ENCODE measurements at regions of chr18 and their contacts with region 1.

Region 1: DNA sequence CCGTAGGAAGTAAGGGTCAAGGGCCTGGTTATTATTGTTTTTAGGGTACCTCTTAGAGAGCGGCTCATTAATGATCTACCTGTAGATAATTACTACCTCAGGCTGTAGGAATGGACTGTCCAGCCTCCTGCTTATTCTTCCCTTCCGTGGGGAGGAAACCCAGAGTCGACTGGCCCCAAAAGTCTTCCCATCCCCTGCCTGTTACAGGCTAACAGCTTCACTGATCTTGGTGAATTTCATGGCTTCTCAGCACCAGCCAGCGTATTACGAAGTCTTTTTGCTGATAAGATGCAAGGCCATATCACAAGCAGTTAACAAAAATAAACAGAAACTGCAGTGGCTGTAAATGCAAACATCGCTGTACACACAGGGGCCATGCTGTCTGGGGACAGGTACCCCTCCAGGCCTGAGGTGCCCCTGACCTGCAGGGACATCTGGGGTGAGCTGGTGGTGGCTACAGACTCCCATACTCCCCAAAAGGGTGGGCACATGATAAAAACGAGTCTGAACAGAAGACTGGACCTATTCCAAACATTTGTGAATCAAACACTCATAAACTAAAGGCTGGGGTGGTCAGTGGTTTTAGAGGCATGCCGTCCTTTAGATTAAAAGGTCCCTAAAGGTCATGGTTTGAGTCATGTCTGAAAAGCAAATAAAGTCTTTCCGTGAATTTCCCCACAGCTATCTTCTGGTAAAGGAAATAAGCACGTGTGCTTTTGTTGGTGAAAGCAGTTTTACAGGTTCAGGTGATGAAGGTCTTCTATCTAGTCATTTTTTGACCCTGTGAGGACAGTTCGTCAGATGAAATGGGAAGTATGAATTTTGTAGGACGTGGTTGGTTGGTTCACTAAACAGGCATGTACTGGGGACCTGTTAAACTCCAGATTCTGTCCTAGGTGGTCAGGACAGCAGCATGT is 36.7 kb downstream of the TTC39C start:
- DNase-seq: no peak
- ATAC-seq: no peak
- H3K4me3 ChIP-seq: no peak overlapping the region
- H3K4me3 Mint-ChIP-seq: peak overlapping the region in 7 of 10 donors; percentile 16 to 50 (median 34)
- H3K27ac ChIP-seq: no peak overlapping the region
- H3K27ac Mint-ChIP-seq: peak overlapping the region in 8 of 9 donors; percentile 2 to 83 (median 51)
- H3K4me1 ChIP-seq: peaks cover 53 to 60% of the 10 kb centered on the region in 2 donors
- H3K4me1 Mint-ChIP-seq: peaks cover 49 to 96% (median 85%) of the 10 kb centered on the region in 7 donors
- H3K27me3 ChIP-seq: no peaks in the 10 kb centered on the region
- H3K27me3 Mint-ChIP-seq: no peaks in the 10 kb centered on the region

Region 2: DNA sequence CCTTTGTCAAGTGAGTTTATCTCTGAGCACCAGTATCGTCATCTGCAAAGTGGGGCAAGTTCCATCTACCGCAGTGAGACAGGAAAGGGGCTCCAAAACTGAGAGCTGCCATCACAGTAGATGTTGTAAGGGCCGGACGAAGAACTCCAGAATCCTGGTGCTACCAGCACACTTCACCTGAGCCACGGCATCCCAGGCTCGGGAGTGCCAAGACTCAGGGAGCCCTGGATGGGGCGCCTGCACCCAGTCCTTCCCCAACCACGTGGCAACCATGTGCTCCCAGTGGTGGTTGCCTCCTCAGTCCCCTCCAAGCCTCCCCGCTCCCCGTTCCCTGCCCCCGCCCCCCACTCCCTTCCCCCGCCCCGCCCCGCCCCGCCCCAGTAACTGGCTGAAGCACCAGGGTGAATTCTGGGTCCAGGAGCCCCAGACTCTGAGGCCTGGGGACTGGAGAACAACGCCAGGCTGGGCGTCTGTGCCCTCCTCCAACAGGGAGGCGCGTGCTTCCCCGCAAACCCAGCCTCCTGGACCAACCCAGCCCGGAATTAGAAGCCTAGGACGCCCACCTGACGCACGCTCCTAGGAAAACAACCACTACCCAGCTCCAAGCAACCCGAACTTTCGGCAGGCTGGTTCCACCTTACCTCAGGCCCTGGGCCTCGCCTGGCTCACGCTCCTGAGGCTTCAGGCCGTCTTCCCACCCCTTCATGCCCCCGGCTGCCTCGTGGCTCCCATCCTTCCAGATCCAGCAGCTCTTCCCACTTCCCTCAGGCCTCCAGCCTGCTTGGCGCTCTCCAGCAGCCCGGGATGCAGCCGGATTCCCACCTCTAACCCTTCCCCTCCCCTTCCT is 294.5 kb before region 1 on chr18:
- CTCF ChIA-PET with region 1: no interaction called
- POLR2A ChIA-PET with region 1: no interaction called
- intact Hi-C with region 1: no loop called
- DNase-seq: no peak
- ATAC-seq: no peak
- H3K4me3 ChIP-seq: no peak overlapping the region
- H3K4me3 Mint-ChIP-seq: no peak overlapping the region
- H3K27ac ChIP-seq: no peak overlapping the region
- H3K27ac Mint-ChIP-seq: no peak overlapping the region
- H3K4me1 ChIP-seq: no peaks in the 10 kb centered on the region
- H3K4me1 Mint-ChIP-seq: no peaks in the 10 kb centered on the region
- H3K27me3 ChIP-seq: no peaks in the 10 kb centered on the region
- H3K27me3 Mint-ChIP-seq: peaks cover 0 to 16% (median 4%) of the 10 kb centered on the region in 5 donors

Region 3: GRCh38 chr18:24019641-24020331 is 31.5 kb before region 1 on chr18:
- CTCF ChIA-PET with region 1: no interaction called
- POLR2A ChIA-PET with region 1: no interaction called
- intact Hi-C with region 1: loop called (anchors 1 to 2 kb)
- DNase-seq: peak in 8 of 9 donors; percentile 53 to 74 (median 62)
- ATAC-seq: peak; percentile 76
- H3K4me3 ChIP-seq: peak overlapping the region; percentile 32
- H3K4me3 Mint-ChIP-seq: peak overlapping the region; percentile 63 to 97 (median 80)
- H3K27ac ChIP-seq: peak overlapping the region; percentile 53
- H3K27ac Mint-ChIP-seq: peak overlapping the region; percentile 75 to 97 (median 93)
- H3K4me1 ChIP-seq: peaks cover 79 to 84% of the 10 kb centered on the region in 2 donors
- H3K4me1 Mint-ChIP-seq: peaks cover 76 to 93% (median 86%) of the 10 kb centered on the region in 7 donors
- H3K27me3 ChIP-seq: no peaks in the 10 kb centered on the region
- H3K27me3 Mint-ChIP-seq: no peaks in the 10 kb centered on the region

Region 4: DNA sequence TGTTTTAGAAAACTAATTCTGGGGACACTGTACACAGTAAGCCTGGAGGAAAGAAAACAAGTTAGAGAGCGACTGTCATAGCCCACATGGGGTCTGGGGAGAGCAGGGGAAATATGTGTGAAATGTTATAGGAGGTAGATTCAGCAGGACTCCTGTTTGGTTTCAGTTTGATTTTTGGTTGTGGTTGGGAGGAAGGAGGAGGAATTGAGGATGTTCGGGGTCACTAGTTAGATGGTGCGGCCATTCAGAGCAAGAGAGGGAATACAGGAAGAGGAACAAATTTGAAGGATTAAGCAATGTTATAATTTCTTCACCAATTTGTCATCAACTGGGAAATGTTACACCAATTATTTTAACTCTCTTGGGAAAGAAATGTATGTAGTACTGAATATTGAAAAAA is 11.6 kb before region 1 on chr18:
- CTCF ChIA-PET with region 1: no interaction called
- POLR2A ChIA-PET with region 1: interaction called, 4 read pairs
- intact Hi-C with region 1: loop called in 1 of 2 experiments (anchors 2 kb)
- DNase-seq: no peak
- ATAC-seq: peak; percentile 67
- H3K4me3 ChIP-seq: no peak overlapping the region
- H3K4me3 Mint-ChIP-seq: peak overlapping the region in 8 of 10 donors; percentile 10 to 56 (median 24)
- H3K27ac ChIP-seq: no peak overlapping the region
- H3K27ac Mint-ChIP-seq: peak overlapping the region in 5 of 9 donors; percentile 14 to 73 (median 54)
- H3K4me1 ChIP-seq: peaks cover 40 to 47% of the 10 kb centered on the region in 2 donors
- H3K4me1 Mint-ChIP-seq: peaks cover 42 to 99% (median 95%) of the 10 kb centered on the region in 7 donors
- H3K27me3 ChIP-seq: no peaks in the 10 kb centered on the region
- H3K27me3 Mint-ChIP-seq: no peaks in the 10 kb centered on the region

Region 5: DNA sequence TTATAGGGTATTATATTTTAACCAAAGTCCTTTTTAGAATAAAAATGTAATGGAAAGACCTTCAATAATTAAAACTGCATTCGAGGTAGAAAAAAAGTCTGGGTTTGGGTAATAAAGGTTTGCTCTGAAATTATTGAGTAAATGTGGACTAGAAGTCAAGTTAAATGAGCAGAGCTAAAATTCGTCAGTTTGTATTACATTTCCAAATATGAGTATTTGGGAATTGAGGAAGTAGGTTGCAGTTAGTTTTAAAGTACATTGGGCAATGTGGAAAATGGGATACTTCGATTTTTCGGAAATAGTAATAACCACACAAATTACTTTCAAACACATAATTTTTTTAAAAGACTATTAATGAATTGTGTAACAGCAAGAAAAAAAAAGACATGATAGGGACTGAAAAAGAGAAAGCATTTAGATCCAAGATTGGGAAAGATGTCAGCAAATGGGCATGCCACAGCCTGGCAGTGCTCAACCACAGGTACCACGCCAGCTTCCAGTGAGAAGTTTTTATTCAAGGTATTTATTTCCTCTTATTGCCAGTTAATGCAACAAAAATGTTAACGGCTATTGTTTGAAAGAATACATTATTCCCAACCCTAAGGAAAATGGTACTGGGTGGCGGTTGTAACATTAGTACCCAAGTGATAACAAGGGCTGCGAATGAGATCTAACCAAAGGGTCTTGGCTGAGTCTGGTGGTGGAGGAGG is 13.3 kb after region 1 on chr18:
- CTCF ChIA-PET with region 1: no interaction called
- POLR2A ChIA-PET with region 1: interaction called, 4 read pairs
- intact Hi-C with region 1: loop called in 1 of 2 experiments (anchors 1 kb)
- DNase-seq: no peak
- ATAC-seq: no peak
- H3K4me3 ChIP-seq: no peak overlapping the region
- H3K4me3 Mint-ChIP-seq: no peak overlapping the region
- H3K27ac ChIP-seq: no peak overlapping the region
- H3K27ac Mint-ChIP-seq: peak overlapping the region in 5 of 9 donors; percentile 3 to 80 (median 58)
- H3K4me1 ChIP-seq: peaks cover 16 to 21% of the 10 kb centered on the region in 2 donors
- H3K4me1 Mint-ChIP-seq: peaks cover 38 to 96% (median 88%) of the 10 kb centered on the region in 7 donors
- H3K27me3 ChIP-seq: no peaks in the 10 kb centered on the region
- H3K27me3 Mint-ChIP-seq: no peaks in the 10 kb centered on the region